Activated B cell treated with CpG ODN at 0.5 μM for 24 hours (primary cell): ENCODE measurements at regions of chr5 and their contacts with region 1.

Region 1: GRCh38 chr5:96662725-96663513 is 743 bp downstream of the CAST start:
- DNase-seq: peak; percentile 89
- ATAC-seq: peak; percentile 72
- H3K4me3 Mint-ChIP-seq: peak overlapping the region; percentile 98
- H3K27ac Mint-ChIP-seq: peak overlapping the region; percentile 98
- H3K4me1 Mint-ChIP-seq: peaks cover 51% of the 10 kb centered on the region
- H3K27me3 Mint-ChIP-seq: no peaks in the 10 kb centered on the region
- CTCF ChIP-seq: no peak

Region 2: DNA sequence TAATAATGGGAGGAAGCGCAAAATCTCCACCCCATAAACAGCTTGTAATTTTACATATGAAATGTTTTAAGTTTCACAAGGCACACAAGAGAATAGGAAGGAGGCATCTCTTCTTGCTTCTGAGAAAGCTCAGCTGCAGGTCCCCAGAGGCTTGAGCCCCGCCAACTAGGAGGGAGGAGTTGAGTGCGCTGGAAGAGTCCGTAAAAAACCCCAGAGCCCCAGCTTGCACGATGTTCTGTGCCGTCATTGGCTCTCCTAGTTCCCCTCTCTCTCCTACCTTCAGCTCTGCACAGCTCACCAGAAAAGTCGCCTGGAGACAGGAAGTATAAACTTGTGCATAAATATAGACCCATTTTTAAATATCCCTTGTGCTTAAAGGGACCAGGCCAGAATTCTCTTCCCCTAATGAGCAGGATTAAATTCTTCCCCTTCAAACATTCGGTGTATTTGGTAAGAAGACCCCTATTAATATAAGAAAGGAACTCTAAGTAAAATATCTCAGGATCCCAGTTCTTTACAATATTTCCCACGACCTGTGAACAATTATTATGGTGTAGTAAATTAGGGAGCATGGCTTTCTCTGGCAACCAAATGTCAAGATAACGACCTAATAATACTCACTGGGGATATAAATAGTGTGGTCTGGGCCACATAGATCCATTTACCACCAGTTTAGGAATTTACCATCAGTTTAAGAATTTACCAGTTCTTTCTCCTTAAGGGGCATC is 854.1 kb before region 1 on chr5:
- CTCF ChIA-PET with region 1: no interaction called
- POLR2A ChIA-PET with region 1: interaction called, 3 read pairs
- intact Hi-C with region 1: loop called (anchors 2 kb)
- DNase-seq: peak; percentile 72
- ATAC-seq: peak; percentile 99
- H3K4me3 Mint-ChIP-seq: peak overlapping the region; percentile 77
- H3K27ac Mint-ChIP-seq: peak overlapping the region; percentile 95
- H3K4me1 Mint-ChIP-seq: peaks cover 56% of the 10 kb centered on the region
- H3K27me3 Mint-ChIP-seq: no peaks in the 10 kb centered on the region
- CTCF ChIP-seq: no peak

Region 3: GRCh38 chr5:96614110-96614691 is 48.7 kb before region 1 on chr5:
- CTCF ChIA-PET with region 1: interaction called, 4 read pairs
- POLR2A ChIA-PET with region 1: interaction called, 3 read pairs
- intact Hi-C with region 1: loop called (anchors 1 kb)
- DNase-seq: no peak
- ATAC-seq: peak; percentile 50
- H3K4me3 Mint-ChIP-seq: no peak overlapping the region
- H3K27ac Mint-ChIP-seq: no peak overlapping the region
- H3K4me1 Mint-ChIP-seq: peaks cover 4% of the 10 kb centered on the region
- H3K27me3 Mint-ChIP-seq: peaks cover 13% of the 10 kb centered on the region
- CTCF ChIP-seq: peak; percentile 22

Region 4: GRCh38 chr5:96702503-96703383 is 39.8 kb after region 1 on chr5:
- CTCF ChIA-PET with region 1: no interaction called
- POLR2A ChIA-PET with region 1: interaction called, 8 read pairs
- intact Hi-C with region 1: loop called (anchors 1 kb)
- DNase-seq: peak; percentile 53
- ATAC-seq: peak; percentile 81
- H3K4me3 Mint-ChIP-seq: peak overlapping the region; percentile 87
- H3K27ac Mint-ChIP-seq: peak overlapping the region; percentile 79
- H3K4me1 Mint-ChIP-seq: peaks cover 34% of the 10 kb centered on the region
- H3K27me3 Mint-ChIP-seq: no peaks in the 10 kb centered on the region
- CTCF ChIP-seq: no peak

Region 5: GRCh38 chr5:97009212-97009898 is 346.4 kb after region 1 on chr5:
- CTCF ChIA-PET with region 1: no interaction called
- POLR2A ChIA-PET with region 1: no interaction called
- intact Hi-C with region 1: loop called (anchors 1 kb)
- DNase-seq: no peak
- ATAC-seq: peak; percentile 83
- H3K4me3 Mint-ChIP-seq: peak overlapping the region; percentile 66
- H3K27ac Mint-ChIP-seq: peak overlapping the region; percentile 91
- H3K4me1 Mint-ChIP-seq: peaks cover 24% of the 10 kb centered on the region
- H3K27me3 Mint-ChIP-seq: no peaks in the 10 kb centered on the region
- CTCF ChIP-seq: no peak

Region 6: DNA sequence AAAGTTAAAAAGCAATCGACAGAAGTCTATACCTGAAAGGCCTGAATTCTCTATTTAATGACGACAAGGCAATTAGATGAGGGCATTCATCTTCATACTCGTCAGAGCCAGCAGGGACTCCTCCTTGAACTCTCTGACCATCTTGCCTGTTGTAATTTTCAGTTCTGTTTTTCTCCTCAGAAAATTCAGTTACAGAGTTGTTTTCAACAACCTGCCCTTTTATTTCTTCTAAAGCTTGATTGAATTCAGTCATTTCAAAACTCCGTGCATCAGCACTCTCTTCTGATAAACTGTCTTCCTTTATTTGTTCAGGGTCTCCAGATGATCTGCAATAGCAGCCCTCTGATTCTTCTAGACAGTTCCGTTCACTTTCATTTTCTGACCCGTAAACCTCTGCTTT is 504.5 kb after region 1 on chr5:
- CTCF ChIA-PET with region 1: no interaction called
- POLR2A ChIA-PET with region 1: no interaction called
- intact Hi-C with region 1: loop called (anchors 5 kb)
- DNase-seq: no peak
- ATAC-seq: peak; percentile 94
- H3K4me3 Mint-ChIP-seq: peak overlapping the region; percentile 70
- H3K27ac Mint-ChIP-seq: peak overlapping the region; percentile 87
- H3K4me1 Mint-ChIP-seq: peaks cover 11% of the 10 kb centered on the region
- H3K27me3 Mint-ChIP-seq: no peaks in the 10 kb centered on the region
- CTCF ChIP-seq: no peak

Region 7: DNA sequence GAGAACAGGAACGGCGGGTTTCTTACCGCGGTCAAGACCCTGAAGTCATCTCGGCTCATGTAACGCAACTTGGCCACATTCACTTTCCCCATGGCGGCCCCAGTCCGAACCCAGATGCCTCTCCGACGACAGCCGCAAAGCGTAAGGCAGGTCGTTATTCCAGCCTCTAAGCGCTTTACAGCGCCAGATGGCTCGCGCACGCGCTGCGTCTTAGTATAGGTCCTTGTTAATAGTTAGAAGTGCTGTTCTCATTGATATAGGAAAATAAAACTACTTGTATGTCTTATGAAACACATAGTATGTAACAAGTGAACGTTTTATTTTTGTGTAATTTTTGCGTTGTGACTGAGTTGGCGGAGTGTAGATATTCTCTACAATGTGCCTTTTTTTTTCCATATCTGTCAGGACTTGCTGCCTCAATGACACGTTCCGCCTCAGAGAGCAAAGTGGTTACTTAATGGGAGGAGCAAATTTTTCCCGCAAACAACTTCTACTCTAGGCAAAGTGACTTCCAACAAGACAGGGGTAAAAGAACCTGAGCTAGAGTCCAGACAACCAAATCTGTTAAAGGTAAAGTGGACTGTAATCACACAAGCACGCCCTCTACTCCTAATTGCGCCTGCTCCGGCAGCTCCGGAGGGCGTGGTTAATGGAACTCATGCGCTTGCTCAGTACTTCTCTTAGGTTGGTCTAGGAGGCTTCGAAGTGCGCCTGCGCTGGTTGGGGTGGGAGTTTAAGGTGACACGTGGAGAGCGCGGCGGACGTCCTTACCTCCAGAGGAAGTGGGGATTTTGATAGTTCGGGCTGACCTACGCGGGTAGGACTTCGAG is 520.4 kb after region 1 on chr5 and contains the start of gene RIOK2:
- CTCF ChIA-PET with region 1: no interaction called
- POLR2A ChIA-PET with region 1: interaction called, 7 read pairs
- intact Hi-C with region 1: loop called (anchors 1 kb)
- DNase-seq: peak; percentile 78
- ATAC-seq: peak; percentile 89
- H3K4me3 Mint-ChIP-seq: peak within 1 kb of the TSS; percentile 96
- H3K27ac Mint-ChIP-seq: peak within 1 kb of the TSS; percentile 99
- H3K4me1 Mint-ChIP-seq: peaks cover 34% of the 10 kb centered on the region
- H3K27me3 Mint-ChIP-seq: no peaks in the 10 kb centered on the region
- CTCF ChIP-seq: no peak
- total RNA-seq, gene RIOK2: 38.3 and 41.4 TPM in 2 replicates

Region 8: GRCh38 chr5:97726106-97726505 is 1063.2 kb after region 1 on chr5:
- CTCF ChIA-PET with region 1: no interaction called
- POLR2A ChIA-PET with region 1: no interaction called
- intact Hi-C with region 1: no loop called
- DNase-seq: no peak
- ATAC-seq: no peak
- H3K4me3 Mint-ChIP-seq: no peak overlapping the region
- H3K27ac Mint-ChIP-seq: no peak overlapping the region
- H3K4me1 Mint-ChIP-seq: no peaks in the 10 kb centered on the region
- H3K27me3 Mint-ChIP-seq: no peaks in the 10 kb centered on the region
- CTCF ChIP-seq: no peak